Posterior vena cava (tissue), 2 donors: ENCODE measurements at regions of chr12 and their contacts with region 1.

Region 1: DNA sequence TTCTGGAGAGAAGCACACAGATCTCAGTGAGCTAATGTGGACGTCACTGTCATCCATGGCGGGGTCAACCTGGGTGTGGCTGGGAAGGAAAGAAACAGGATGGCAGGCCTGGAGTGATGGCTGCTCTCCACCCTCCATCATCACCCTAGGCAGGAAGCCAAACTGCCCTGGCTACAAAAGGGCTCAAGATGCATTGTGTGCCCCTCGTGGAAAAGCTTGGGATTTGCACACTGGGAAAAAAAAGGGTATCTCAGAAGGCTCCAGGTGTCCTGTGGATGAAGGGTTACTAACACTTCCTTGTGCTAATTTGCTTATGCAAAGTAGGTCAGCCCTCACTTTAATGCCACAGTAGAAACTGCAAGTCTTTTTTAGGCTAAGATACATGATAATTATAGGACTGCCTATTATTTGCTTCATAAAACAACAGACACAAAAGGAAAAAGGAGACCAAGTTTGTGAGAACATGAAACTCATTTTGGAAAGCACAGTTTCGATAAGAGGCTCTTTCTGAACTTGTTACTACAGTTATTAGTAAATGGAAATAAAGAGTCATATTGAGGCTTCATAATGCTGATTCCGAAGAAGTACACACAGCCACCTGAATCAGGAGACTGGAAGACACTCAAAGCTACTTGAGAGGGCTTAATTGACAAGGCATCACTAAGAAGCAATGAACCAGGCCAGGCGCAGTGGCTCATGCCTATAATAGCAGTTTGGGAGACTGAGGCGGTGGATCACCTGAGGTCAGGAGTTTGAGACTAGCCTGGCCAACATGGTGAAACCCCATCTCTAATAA is 18.9 kb downstream of the RFC5 start:
- DNase-seq: no peak

Region 2: GRCh38 chr12:117986705-117987469 is 48.6 kb before region 1 on chr12:
- intact Hi-C with region 1: no loop called
- DNase-seq: no peak

Region 3: DNA sequence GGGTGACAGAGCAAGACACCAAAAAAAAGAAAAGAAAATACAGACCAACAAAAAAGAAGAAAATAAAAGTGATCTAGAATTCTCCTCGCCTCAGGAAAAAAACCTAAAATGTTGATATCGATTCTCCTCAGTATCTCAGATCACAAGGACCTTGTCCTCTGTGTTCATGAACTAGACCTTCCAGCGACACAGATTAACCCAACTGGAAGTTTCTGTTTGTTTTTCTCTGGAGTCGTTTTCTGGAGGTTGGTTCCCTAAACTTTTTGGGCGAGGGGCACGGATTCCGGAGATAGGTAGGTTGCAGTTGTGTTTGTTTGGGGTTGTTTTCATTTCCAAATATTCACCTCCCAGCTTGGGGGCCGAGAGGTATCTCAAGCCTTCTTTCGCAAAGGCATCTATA is 19.5 kb before region 1 on chr12:
- intact Hi-C with region 1: loop called in 1 of 2 experiments (anchors 1 kb)
- DNase-seq: no peak